CD8-positive, alpha-beta T cell (primary cell): ENCODE measurements at regions of chr20 and their contacts with region 1.

Region 1: DNA sequence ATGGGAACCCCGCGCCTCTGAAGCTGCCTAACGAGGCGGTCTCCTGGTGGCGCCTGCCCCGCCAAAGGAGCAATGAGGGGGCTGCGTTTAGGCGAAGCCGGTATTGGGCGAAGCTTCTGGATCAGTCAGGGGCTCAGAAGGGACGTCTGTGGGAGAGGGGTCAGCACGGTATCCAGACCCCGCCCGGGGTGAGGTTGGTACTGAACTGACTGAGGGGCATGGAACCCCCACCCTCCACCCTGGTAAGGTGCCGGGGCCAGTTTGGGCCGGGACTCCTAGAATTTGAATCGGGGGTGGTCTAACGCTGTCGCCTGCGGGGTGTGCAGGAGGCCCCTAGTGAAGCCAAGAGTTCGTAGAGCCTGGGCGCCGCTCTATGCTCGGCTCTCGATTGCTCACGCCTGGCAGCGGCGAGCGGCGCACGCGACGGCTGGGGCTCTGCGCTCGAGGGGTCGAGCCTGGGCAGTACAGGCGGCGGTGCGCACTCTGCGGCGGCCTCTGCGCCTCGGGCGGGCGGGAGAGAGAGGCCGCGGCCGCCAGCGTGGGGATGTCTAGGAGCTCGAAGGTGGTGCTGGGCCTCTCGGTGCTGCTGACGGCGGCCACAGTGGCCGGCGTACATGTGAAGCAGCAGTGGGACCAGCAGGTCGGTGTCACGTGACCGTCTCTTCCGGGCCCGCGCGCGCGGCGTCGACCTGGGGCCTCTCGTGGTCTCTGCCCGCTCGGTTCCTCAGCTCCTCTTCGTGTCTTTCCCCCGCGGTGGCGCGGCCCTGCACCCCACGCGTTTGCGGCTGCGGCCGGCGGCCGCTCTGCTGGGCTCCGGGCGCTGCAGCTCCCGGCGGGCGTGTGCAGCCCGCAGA is at the starts of genes KAT14 and PET117:
- DNase-seq: peak; percentile 84 to 97 (median 90)
- ATAC-seq: peak; percentile 91
- H3K4me3 ChIP-seq: peak within 1 kb of the TSS; percentile 89 to 98
- H3K4me3 Mint-ChIP-seq: peak within 1 kb of the TSS; percentile 88
- H3K27ac ChIP-seq: peak within 1 kb of the TSS; percentile 84 to 91
- H3K27ac Mint-ChIP-seq: peak within 1 kb of the TSS; percentile 91
- H3K4me1 ChIP-seq: peaks cover 19% of the 10 kb centered on the region
- H3K4me1 Mint-ChIP-seq: peaks cover 36% of the 10 kb centered on the region
- H3K27me3 ChIP-seq: no peaks in the 10 kb centered on the region
- H3K27me3 Mint-ChIP-seq: no peaks in the 10 kb centered on the region
- CTCF ChIP-seq: no peak
- total RNA-seq, gene KAT14: 7.8 to 8.4 TPM
- total RNA-seq, gene PET117: 15.3 to 17.3 TPM

Region 2: GRCh38 chr20:16729565-16730456 is 1407.8 kb before region 1 on chr20 and contains the start of gene SNRPB2:
- CTCF ChIA-PET with region 1: no interaction called
- POLR2A ChIA-PET with region 1: interaction called, 3 read pairs
- intact Hi-C with region 1: loop called (anchors 2 to 5 kb)
- DNase-seq: peak; percentile 81 to 96 (median 91)
- ATAC-seq: peak; percentile 95
- H3K4me3 ChIP-seq: peak within 1 kb of the TSS; percentile 84 to 97
- H3K4me3 Mint-ChIP-seq: peak within 1 kb of the TSS; percentile 100
- H3K27ac ChIP-seq: peak within 1 kb of the TSS; percentile 93 to 94
- H3K27ac Mint-ChIP-seq: peak within 1 kb of the TSS; percentile 100
- H3K4me1 ChIP-seq: peaks cover 36% of the 10 kb centered on the region
- H3K4me1 Mint-ChIP-seq: peaks cover 52% of the 10 kb centered on the region
- H3K27me3 ChIP-seq: peaks cover 0 to 12% of the 10 kb centered on the region in 2 experiments
- H3K27me3 Mint-ChIP-seq: peaks cover 15% of the 10 kb centered on the region
- CTCF ChIP-seq: no peak
- total RNA-seq, gene SNRPB2: 49.0 to 50.4 TPM

Region 3: GRCh38 chr20:17569616-17570346 is 567.9 kb before region 1 on chr20 and contains the start of gene DSTN:
- CTCF ChIA-PET with region 1: no interaction called
- POLR2A ChIA-PET with region 1: no interaction called
- intact Hi-C with region 1: loop called in 1 of 2 experiments (anchors 10 kb)
- DNase-seq: peak; percentile 76 to 94 (median 86)
- ATAC-seq: peak; percentile 88
- H3K4me3 ChIP-seq: peak within 1 kb of the TSS; percentile 80 to 92
- H3K4me3 Mint-ChIP-seq: peak within 1 kb of the TSS; percentile 85
- H3K27ac ChIP-seq: peak within 1 kb of the TSS; percentile 73 to 81
- H3K27ac Mint-ChIP-seq: peak within 1 kb of the TSS; percentile 91
- H3K4me1 ChIP-seq: peaks cover 24% of the 10 kb centered on the region
- H3K4me1 Mint-ChIP-seq: peaks cover 28% of the 10 kb centered on the region
- H3K27me3 ChIP-seq: no peaks in the 10 kb centered on the region
- H3K27me3 Mint-ChIP-seq: no peaks in the 10 kb centered on the region
- CTCF ChIP-seq: no peak
- total RNA-seq, gene DSTN: 40.5 to 42.9 TPM

Region 4: GRCh38 chr20:18496740-18497592 is 359.3 kb after region 1 on chr20 and contains the start of gene RBBP9:
- CTCF ChIA-PET with region 1: no interaction called
- POLR2A ChIA-PET with region 1: no interaction called
- intact Hi-C with region 1: loop called (anchors 5 to 10 kb)
- DNase-seq: peak; percentile 31 to 86 (median 75)
- ATAC-seq: peak; percentile 98
- H3K4me3 ChIP-seq: peak within 1 kb of the TSS; percentile 77 to 93
- H3K4me3 Mint-ChIP-seq: peak within 1 kb of the TSS; percentile 96
- H3K27ac ChIP-seq: peak within 1 kb of the TSS; percentile 50 to 62
- H3K27ac Mint-ChIP-seq: peak within 1 kb of the TSS; percentile 90
- H3K4me1 ChIP-seq: peaks cover 16% of the 10 kb centered on the region
- H3K4me1 Mint-ChIP-seq: peaks cover 20% of the 10 kb centered on the region
- H3K27me3 ChIP-seq: no peaks in the 10 kb centered on the region
- H3K27me3 Mint-ChIP-seq: no peaks in the 10 kb centered on the region
- CTCF ChIP-seq: no peak
- total RNA-seq, gene RBBP9: 2.1 to 2.3 TPM

Region 5: GRCh38 chr20:18566892-18567742 is 429.5 kb after region 1 on chr20 and contains the start of gene SMIM26:
- CTCF ChIA-PET with region 1: no interaction called
- POLR2A ChIA-PET with region 1: no interaction called
- intact Hi-C with region 1: loop called (anchors 5 kb)
- DNase-seq: peak; percentile 88 to 97 (median 95)
- ATAC-seq: peak; percentile 98
- H3K4me3 ChIP-seq: peak within 1 kb of the TSS; percentile 54 to 90
- H3K4me3 Mint-ChIP-seq: peak within 1 kb of the TSS; percentile 96
- H3K27ac ChIP-seq: peak within 1 kb of the TSS; percentile 79 to 94
- H3K27ac Mint-ChIP-seq: peak within 1 kb of the TSS; percentile 99
- H3K4me1 ChIP-seq: peaks cover 14% of the 10 kb centered on the region
- H3K4me1 Mint-ChIP-seq: peaks cover 22% of the 10 kb centered on the region
- H3K27me3 ChIP-seq: no peaks in the 10 kb centered on the region
- H3K27me3 Mint-ChIP-seq: no peaks in the 10 kb centered on the region
- CTCF ChIP-seq: no peak
- total RNA-seq, gene SMIM26: 63.9 to 64.8 TPM

Region 6: GRCh38 chr20:20017001-20017843 is 1879.6 kb after region 1 on chr20 and contains the start of gene NAA20:
- CTCF ChIA-PET with region 1: no interaction called
- POLR2A ChIA-PET with region 1: no interaction called
- intact Hi-C with region 1: loop called (anchors 5 to 10 kb)
- DNase-seq: peak; percentile 75 to 94 (median 91)
- ATAC-seq: peak; percentile 94
- H3K4me3 ChIP-seq: peak within 1 kb of the TSS; percentile 77 to 89
- H3K4me3 Mint-ChIP-seq: peak within 1 kb of the TSS; percentile 91
- H3K27ac ChIP-seq: peak within 1 kb of the TSS; percentile 63 to 82
- H3K27ac Mint-ChIP-seq: peak within 1 kb of the TSS; percentile 91
- H3K4me1 ChIP-seq: peaks cover 44% of the 10 kb centered on the region
- H3K4me1 Mint-ChIP-seq: peaks cover 53% of the 10 kb centered on the region
- H3K27me3 ChIP-seq: no peaks in the 10 kb centered on the region
- H3K27me3 Mint-ChIP-seq: no peaks in the 10 kb centered on the region
- CTCF ChIP-seq: peak; percentile 58
- total RNA-seq, gene NAA20: 32.9 to 33.2 TPM